ENCODE measurements at regions of chr5 and their contacts with region 1.

Region 1: GRCh38 chr5:135185481-135186065 is 151.5 kb upstream of the PITX1 start:
- DNase-seq: peak; percentile 65
- ATAC-seq: peak; percentile 57; the same call in 1 of the 2 replicates
- H3K4me3 ChIP-seq: no peak overlapping the region
- H3K27ac ChIP-seq: no peak overlapping the region
- H3K4me1 ChIP-seq: peaks cover 6% of the 10 kb centered on the region; the same call in 1 of the 2 replicates
- H3K27me3 ChIP-seq: no peaks in the 10 kb centered on the region
- CTCF ChIP-seq: no peak
- POLR2A ChIP-seq: no peak
- RAD21 ChIP-seq: no peak

Region 2: GRCh38 chr5:134851307-134851923 is 334.2 kb before region 1 on chr5:
- CTCF ChIA-PET with region 1: no interaction called
- POLR2A ChIA-PET with region 1: interaction called, 19 read pairs
- dilution Hi-C with region 1: no loop called
- in situ Hi-C with region 1: no loop called
- intact Hi-C with region 1: no loop called
- DNase-seq: peak; percentile 56
- ATAC-seq: peak; percentile 53; the same call in 1 of the 2 replicates
- H3K4me3 ChIP-seq: no peak overlapping the region
- H3K27ac ChIP-seq: peak overlapping the region; percentile 53; the same call in 1 of the 2 replicates
- H3K4me1 ChIP-seq: peaks cover 9% of the 10 kb centered on the region
- H3K27me3 ChIP-seq: no peaks in the 10 kb centered on the region
- CTCF ChIP-seq: peak; percentile 63
- POLR2A ChIP-seq: no peak
- RAD21 ChIP-seq: peak; percentile 70

Region 3: GRCh38 chr5:134873987-134874830 is 311.4 kb before region 1 on chr5 and contains the start of gene TXNDC15:
- CTCF ChIA-PET with region 1: interaction called, 10 read pairs
- POLR2A ChIA-PET with region 1: no interaction called
- dilution Hi-C with region 1: no loop called
- in situ Hi-C with region 1: no loop called
- intact Hi-C with region 1: no loop called
- DNase-seq: peak; percentile 86
- ATAC-seq: peak; percentile 88
- H3K4me3 ChIP-seq: peak within 1 kb of the TSS; percentile 81
- H3K27ac ChIP-seq: peak within 1 kb of the TSS; percentile 99
- H3K4me1 ChIP-seq: peaks cover 5% of the 10 kb centered on the region; the same call in 1 of the 2 replicates
- H3K27me3 ChIP-seq: no peaks in the 10 kb centered on the region
- CTCF ChIP-seq: no peak
- POLR2A ChIP-seq: peak; percentile 76
- RAD21 ChIP-seq: no peak
- total RNA-seq, gene TXNDC15: 101 and 125 TPM in 2 replicates

Region 4: DNA sequence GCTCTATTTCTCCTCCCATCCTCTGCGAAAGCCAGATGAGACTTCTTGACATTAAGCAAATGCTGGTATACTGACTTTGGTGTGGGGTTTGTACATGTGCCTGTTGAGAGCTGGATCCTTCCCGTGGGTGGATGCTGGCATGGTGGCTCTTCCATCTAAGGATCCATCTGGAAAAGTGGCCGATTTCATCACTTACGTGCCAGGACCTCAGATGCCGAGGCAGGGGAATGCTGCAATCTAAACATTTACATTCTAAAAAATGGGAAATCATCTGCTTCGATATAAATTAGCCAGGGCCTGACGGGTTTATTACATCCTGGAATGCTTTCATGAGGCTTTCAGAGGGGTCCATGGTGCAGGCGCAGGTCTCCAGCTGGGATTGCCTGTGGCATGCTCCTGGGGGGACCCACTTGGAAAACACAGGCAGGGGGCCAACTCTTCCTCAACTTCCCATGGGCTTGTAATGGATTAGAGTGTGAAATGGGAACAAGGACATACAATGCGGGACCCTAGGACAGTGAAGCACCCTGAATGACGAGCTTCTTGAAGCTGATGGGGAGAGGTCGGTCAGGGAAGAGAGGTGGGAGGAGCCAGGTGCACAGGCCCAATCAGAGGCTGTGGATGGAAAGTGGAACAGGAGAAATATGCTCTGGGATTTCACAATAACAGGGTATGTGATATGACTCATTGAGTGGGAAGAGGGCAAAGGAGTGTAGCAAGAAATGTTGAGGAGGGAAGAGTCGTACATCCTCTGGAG is 46.0 kb before region 1 on chr5:
- CTCF ChIA-PET with region 1: interaction called, 6 read pairs
- POLR2A ChIA-PET with region 1: interaction called, 4 read pairs
- dilution Hi-C with region 1: no loop called
- in situ Hi-C with region 1: no loop called
- intact Hi-C with region 1: loop called (anchors 5 kb)
- DNase-seq: peak; percentile 96
- ATAC-seq: peak; percentile 83
- H3K4me3 ChIP-seq: no peak overlapping the region; the same call in 1 of the 2 replicates
- H3K27ac ChIP-seq: peak overlapping the region; percentile 99
- H3K4me1 ChIP-seq: peaks cover 45% of the 10 kb centered on the region
- H3K27me3 ChIP-seq: no peaks in the 10 kb centered on the region
- CTCF ChIP-seq: no peak
- POLR2A ChIP-seq: no peak
- RAD21 ChIP-seq: no peak